Activated naive CD8-positive, alpha-beta T cell treated with anti-CD3 and anti-CD28 coated beads, Interleukin-2, amount 10 ng/mL, durations not matched to agents 7 days and 5 days (primary cell): ENCODE measurements at regions of chr2 and their contacts with region 1.

Region 1: DNA sequence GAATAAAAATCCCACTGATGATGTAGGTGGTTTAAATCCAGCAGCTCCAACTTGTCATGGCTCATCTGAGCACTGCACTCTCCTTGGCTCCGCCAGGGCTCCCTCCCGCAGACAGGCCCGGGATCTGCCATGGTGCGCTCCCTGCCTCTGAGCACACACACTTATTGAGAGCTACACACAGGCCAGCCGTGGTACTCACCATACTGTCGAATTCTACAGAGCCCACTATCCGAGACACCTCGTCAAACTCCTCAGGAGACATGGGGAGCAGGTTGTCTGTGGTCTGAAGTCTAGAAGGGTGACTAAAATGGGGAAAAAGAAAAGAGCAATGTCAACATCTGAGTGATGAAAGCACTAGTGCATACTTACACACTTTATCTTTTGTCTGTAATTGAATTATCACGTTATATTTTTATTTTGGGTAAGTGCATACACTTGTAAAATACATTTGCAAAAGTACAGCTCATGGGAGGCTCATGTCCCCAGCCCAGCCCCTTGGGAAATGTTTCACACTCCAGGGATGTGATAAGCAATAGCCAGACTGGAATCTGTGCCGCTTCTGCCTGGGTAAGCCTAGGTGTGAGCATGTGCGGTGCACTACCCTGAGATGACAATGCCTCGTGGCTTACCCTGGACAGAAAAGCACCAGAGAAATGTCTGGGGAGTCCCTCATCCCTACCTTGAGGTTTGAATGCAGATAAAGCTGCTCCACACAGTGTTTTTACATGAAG is 39.2 kb downstream of the STAT1 start:
- DNase-seq: no peak
- ATAC-seq: no peak
- H3K4me3 Mint-ChIP-seq: no peak overlapping the region
- H3K27ac Mint-ChIP-seq: peak overlapping the region; percentile 26
- H3K4me1 Mint-ChIP-seq: peaks cover 26% of the 10 kb centered on the region
- H3K27me3 Mint-ChIP-seq: no peaks in the 10 kb centered on the region

Region 2: DNA sequence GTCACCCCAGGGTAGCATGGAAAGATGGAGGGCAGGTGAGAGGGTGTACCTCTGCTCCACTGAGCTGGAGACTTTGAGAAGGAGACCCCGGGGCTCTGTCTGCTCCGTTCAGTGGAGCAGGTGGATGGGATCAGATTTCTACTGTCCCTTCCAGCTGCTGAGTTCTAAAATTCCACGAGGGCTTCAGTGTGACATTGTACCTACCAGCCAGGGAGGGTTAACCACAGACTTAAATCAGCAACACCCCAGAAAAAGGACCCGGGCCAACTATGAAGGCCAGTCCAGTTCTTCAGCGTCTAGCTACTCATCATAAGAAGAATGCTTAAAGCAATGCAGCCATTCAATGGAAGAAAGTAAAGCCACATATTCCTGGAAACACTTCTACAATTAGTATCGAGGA is 15.3 kb after region 1 on chr2:
- POLR2A ChIA-PET with region 1: interaction called, 12 read pairs
- DNase-seq: no peak
- ATAC-seq: no peak
- H3K4me3 Mint-ChIP-seq: no peak overlapping the region
- H3K27ac Mint-ChIP-seq: peak overlapping the region; percentile 58
- H3K4me1 Mint-ChIP-seq: peaks cover 56% of the 10 kb centered on the region
- H3K27me3 Mint-ChIP-seq: no peaks in the 10 kb centered on the region

Region 3: DNA sequence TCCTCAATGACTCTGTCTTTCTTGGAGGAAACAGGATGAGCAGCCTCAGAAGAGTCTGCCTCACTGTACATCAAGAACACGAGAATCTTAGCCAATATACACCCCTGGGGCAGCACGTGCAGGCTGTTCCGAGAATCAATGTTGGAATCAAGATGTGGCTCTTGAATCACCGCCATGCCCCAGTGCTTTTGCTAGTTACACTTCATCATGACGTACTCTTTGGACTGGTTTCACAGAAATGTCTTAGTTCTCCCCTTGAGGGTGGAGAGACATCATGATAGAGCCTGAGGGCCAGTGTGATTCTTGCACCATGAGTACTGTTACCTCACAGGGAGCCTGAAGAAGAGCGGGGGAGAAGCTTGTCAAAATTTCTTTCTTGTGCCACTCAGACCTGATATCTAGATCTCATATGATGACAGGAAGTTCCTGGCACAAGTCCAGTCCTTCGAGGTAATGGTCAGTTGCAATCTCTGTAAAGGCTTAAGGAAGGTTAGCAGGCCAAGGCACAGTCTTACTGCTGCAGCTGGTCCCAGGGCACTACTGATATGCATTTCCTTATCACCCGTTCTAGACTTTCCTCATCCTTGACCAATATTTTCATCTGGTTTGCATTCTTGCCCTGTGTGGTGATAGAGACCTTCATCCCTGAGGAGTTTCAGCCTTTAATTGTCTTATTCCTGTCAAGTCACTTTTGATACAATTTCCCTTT is 204.2 kb after region 1 on chr2:
- POLR2A ChIA-PET with region 1: no interaction called
- DNase-seq: no peak
- ATAC-seq: no peak
- H3K4me3 Mint-ChIP-seq: no peak overlapping the region
- H3K27ac Mint-ChIP-seq: no peak overlapping the region
- H3K4me1 Mint-ChIP-seq: peaks cover 23% of the 10 kb centered on the region
- H3K27me3 Mint-ChIP-seq: no peaks in the 10 kb centered on the region

Region 4: GRCh38 chr2:191231995-191232394 is 257.2 kb after region 1 on chr2:
- POLR2A ChIA-PET with region 1: no interaction called
- DNase-seq: no peak
- ATAC-seq: no peak
- H3K4me3 Mint-ChIP-seq: no peak overlapping the region
- H3K27ac Mint-ChIP-seq: no peak overlapping the region
- H3K4me1 Mint-ChIP-seq: no peaks in the 10 kb centered on the region
- H3K27me3 Mint-ChIP-seq: no peaks in the 10 kb centered on the region